ENCODE measurements at regions of chr6 and their contacts with region 1.

Region 1: DNA sequence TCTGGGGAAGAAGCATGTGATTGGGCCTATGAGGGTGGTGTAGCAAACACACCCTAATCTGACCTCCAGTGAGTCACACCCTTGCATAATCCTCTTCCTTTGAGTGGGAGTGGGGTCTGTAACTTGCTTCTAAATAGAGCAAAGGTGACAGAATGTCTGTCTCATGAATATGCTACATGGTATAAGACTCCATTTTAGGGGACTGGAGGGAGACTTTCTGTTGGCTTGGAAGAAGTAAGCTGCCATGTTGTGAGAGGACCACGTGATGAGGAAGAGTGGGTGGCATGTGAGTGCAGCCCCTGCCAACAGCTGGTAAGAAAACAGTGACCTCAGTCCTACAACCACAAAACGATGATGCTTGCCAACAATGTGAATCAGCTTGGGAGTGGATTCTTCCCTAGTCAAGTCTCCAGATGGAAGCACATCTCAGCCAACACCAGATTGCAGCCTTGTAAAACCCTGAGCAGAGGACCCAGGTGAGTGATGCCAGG is 3.7 kb downstream of the AK9 start:
- DNase-seq: no peak
- H3K4me3 ChIP-seq: no peak overlapping the region
- H3K27ac ChIP-seq: no peak overlapping the region
- H3K4me1 ChIP-seq: no peaks in the 10 kb centered on the region
- H3K27me3 ChIP-seq: no peaks in the 10 kb centered on the region
- CTCF ChIP-seq: no peak

Region 2: GRCh38 chr6:109447878-109448555 is 239.3 kb before region 1 on chr6:
- intact Hi-C with region 1: loop called (anchors 5 kb)
- DNase-seq: no peak
- H3K4me3 ChIP-seq: no peak overlapping the region
- H3K27ac ChIP-seq: no peak overlapping the region
- H3K4me1 ChIP-seq: no peaks in the 10 kb centered on the region
- H3K27me3 ChIP-seq: no peaks in the 10 kb centered on the region
- CTCF ChIP-seq: no peak

Region 3: GRCh38 chr6:109526905-109527628 is 160.2 kb before region 1 on chr6:
- intact Hi-C with region 1: loop called (anchors 10 kb)
- DNase-seq: peak; percentile 31
- H3K4me3 ChIP-seq: no peak overlapping the region
- H3K27ac ChIP-seq: no peak overlapping the region
- H3K4me1 ChIP-seq: no peaks in the 10 kb centered on the region
- H3K27me3 ChIP-seq: no peaks in the 10 kb centered on the region
- CTCF ChIP-seq: peak; percentile 63

Measured in colonic mucosa (tissue), 4 donors.